ENCODE measurements at regions of chr16 and their contacts with region 1.

Region 1: DNA sequence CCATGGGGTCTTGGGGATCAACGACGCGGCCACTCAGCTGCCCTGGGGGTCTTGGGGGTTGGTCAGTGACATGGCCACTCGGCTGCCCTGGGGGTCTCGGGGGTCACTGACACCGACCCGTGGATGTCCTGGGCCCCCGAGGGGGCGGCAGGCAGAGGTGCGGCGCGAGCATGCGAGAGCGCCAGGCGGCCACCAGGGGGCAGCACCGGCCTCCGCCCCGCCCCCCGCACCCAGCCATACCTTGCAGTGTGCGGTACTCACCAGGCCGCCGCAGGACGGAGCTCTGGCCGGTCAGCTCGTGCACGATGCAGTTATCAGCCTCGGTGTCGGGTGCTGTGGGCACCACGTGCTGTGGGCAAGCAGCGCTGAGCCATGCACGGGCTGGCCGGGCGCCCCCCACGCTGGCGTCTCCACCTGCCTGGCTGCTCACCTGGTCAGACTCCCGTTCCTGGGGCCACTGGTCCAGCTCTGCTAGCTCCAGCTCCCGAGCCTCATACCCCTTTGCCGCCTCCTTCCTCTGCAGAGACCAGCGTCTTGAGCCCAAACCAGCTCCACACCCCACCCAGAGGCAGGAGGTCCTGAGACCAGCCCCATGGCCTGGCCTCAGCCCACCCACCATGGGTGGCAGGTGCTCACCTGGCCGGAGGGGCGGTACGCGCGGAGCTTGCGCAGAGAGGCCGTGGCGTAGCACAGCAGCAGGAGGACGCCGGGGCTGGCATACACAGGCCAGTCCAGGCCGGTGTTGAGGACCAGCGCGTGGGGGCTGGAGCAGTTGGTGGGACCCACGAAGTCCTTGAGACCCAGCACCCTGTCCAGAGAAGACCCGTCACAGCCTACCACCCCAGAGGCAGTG is 31.2 kb downstream of the CTU2 start:
- DNase-seq: peak; percentile 34 to 88 (median 59)
- ATAC-seq: peak; percentile 97
- H3K4me3 ChIP-seq: no peak overlapping the region
- H3K4me3 Mint-ChIP-seq: no peak overlapping the region
- H3K27ac ChIP-seq: no peak overlapping the region
- H3K27ac Mint-ChIP-seq: no peak overlapping the region
- H3K4me1 ChIP-seq: peaks cover 6% of the 10 kb centered on the region
- H3K4me1 Mint-ChIP-seq: peaks cover 2% of the 10 kb centered on the region
- H3K27me3 ChIP-seq: no peaks in the 10 kb centered on the region
- H3K27me3 Mint-ChIP-seq: no peaks in the 10 kb centered on the region
- CTCF ChIP-seq: peak; percentile 95

Region 2: GRCh38 chr16:88706288-88706964 is 31.1 kb before region 1 on chr16 and contains the starts of genes CTU2 and RNF166:
- CTCF ChIA-PET with region 1: interaction called, 13 read pairs
- POLR2A ChIA-PET with region 1: interaction called, 4 read pairs
- intact Hi-C with region 1: loop called in 1 of 2 experiments (anchors 5 kb)
- DNase-seq: peak; percentile 79 to 97 (median 91)
- ATAC-seq: peak; percentile 55
- H3K4me3 ChIP-seq: peak within 1 kb of the TSS; percentile 80 to 89
- H3K4me3 Mint-ChIP-seq: peak within 1 kb of the TSS; percentile 90
- H3K27ac ChIP-seq: peak within 1 kb of the TSS; percentile 88 to 91
- H3K27ac Mint-ChIP-seq: peak within 1 kb of the TSS; percentile 98
- H3K4me1 ChIP-seq: peaks cover 30% of the 10 kb centered on the region
- H3K4me1 Mint-ChIP-seq: peaks cover 44% of the 10 kb centered on the region
- H3K27me3 ChIP-seq: no peaks in the 10 kb centered on the region
- H3K27me3 Mint-ChIP-seq: no peaks in the 10 kb centered on the region
- CTCF ChIP-seq: no peak
- total RNA-seq, gene CTU2: 59.5 to 60.4 TPM
- total RNA-seq, gene RNF166: 371 to 406 TPM

Region 3: DNA sequence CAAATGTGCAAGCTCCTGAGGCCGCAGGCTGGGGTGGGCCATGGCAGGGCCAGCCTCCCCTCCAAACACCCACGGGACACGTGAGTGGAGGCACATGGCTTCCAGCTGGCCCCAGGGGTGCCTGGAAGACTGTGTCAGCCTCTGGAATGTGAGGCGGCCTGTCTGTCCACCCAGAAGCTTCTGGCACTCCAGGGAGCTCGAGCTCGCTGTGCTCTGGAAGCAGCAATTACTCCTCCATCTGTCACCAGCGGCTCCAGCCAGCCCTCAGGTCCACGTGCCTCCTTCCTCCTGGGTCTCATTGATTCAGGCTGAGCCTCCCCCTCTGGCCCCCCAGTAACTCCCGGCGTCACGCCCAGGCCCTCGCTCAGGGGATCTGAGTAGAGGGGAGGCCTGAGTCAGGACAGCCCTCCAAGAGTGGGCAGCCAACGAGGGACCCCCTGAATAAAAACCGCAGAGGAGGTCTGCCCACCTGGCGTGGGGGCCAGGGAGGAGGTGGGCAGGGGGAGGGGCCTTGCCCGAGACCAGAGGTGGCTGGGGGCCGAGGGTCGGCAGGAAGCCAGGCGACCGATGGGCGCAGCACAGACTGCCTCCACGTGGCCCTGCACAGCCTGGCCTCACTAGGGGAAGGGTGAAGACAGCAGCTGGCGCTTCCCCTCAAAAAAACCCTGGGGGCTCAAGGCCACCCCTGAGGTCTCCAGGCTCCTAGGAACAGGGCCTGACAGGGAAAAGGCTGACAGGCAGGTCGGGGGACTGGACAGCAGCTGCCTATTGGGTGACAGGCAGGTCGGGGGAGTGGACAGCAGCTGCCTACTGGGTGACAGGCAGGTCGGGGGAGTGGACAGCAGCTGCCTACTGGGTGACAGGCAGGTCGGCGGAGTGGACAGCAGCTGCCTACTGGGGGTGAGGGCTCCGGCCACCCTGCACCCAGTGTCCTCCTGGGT is 35.6 kb after region 1 on chr16:
- CTCF ChIA-PET with region 1: interaction called, 12 read pairs
- POLR2A ChIA-PET with region 1: interaction called, 3 read pairs
- intact Hi-C with region 1: no loop called
- DNase-seq: no peak
- ATAC-seq: no peak
- H3K4me3 ChIP-seq: no peak overlapping the region
- H3K4me3 Mint-ChIP-seq: no peak overlapping the region
- H3K27ac ChIP-seq: no peak overlapping the region
- H3K27ac Mint-ChIP-seq: no peak overlapping the region
- H3K4me1 ChIP-seq: peaks cover 29% of the 10 kb centered on the region
- H3K4me1 Mint-ChIP-seq: peaks cover 15% of the 10 kb centered on the region
- H3K27me3 ChIP-seq: no peaks in the 10 kb centered on the region
- H3K27me3 Mint-ChIP-seq: no peaks in the 10 kb centered on the region
- CTCF ChIP-seq: no peak

Region 4: DNA sequence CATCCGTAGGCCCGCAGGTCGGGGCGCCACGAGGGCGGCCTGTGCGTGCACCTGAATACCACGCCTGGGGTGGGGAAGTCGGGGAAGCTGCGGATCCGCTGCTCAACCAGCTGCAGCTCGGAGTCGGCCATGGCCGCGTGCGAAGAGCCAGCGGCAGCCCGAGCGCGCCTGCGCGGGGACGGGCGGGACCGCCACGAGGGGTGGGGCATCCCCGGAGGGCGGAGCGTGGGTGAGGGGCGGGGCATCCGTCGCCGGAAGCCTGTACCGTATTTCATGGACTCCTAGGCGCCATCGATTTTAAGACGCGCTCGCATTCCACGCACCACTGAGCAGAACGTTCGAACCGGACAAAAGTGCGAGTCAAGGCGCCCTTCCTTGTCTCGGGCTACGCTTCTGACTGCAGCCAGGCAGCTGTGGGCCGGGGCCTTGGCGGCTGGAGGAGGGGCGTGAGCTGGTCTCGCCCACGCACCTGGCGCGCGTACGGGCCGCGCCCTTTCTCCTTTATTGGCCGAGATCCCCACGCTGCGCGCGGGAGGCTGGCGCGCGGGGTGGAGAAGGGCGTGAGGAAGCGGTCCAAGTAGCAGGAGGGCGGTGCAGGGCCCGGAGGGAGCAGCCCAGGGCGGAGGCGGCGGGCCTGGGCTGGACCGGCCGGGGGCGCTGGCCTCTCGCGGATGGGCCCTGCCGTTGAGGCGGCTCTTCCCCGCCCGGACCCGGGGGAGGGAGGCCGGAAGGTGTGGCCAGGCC is 74.4 kb after region 1 on chr16 and contains the start of gene APRT:
- CTCF ChIA-PET with region 1: interaction called, 11 read pairs
- POLR2A ChIA-PET with region 1: no interaction called
- intact Hi-C with region 1: no loop called
- DNase-seq: peak; percentile 93 to 99 (median 97)
- ATAC-seq: peak; percentile 90
- H3K4me3 ChIP-seq: peak within 1 kb of the TSS; percentile 75 to 99
- H3K4me3 Mint-ChIP-seq: peak within 1 kb of the TSS; percentile 97
- H3K27ac ChIP-seq: peak within 1 kb of the TSS; percentile 71 to 87
- H3K27ac Mint-ChIP-seq: peak within 1 kb of the TSS; percentile 97
- H3K4me1 ChIP-seq: peaks cover 21% of the 10 kb centered on the region
- H3K4me1 Mint-ChIP-seq: peaks cover 19% of the 10 kb centered on the region
- H3K27me3 ChIP-seq: no peaks in the 10 kb centered on the region
- H3K27me3 Mint-ChIP-seq: no peaks in the 10 kb centered on the region
- CTCF ChIP-seq: no peak
- total RNA-seq, gene APRT: 171 to 178 TPM

Measured in CD8-positive, alpha-beta T cell (primary cell).